Activated CD4-positive, alpha-beta T cell treated with anti-CD3 and anti-CD28 coated beads for 36 hours (primary cell): ENCODE measurements at regions of chr1 and their contacts with region 1.

Region 1: DNA sequence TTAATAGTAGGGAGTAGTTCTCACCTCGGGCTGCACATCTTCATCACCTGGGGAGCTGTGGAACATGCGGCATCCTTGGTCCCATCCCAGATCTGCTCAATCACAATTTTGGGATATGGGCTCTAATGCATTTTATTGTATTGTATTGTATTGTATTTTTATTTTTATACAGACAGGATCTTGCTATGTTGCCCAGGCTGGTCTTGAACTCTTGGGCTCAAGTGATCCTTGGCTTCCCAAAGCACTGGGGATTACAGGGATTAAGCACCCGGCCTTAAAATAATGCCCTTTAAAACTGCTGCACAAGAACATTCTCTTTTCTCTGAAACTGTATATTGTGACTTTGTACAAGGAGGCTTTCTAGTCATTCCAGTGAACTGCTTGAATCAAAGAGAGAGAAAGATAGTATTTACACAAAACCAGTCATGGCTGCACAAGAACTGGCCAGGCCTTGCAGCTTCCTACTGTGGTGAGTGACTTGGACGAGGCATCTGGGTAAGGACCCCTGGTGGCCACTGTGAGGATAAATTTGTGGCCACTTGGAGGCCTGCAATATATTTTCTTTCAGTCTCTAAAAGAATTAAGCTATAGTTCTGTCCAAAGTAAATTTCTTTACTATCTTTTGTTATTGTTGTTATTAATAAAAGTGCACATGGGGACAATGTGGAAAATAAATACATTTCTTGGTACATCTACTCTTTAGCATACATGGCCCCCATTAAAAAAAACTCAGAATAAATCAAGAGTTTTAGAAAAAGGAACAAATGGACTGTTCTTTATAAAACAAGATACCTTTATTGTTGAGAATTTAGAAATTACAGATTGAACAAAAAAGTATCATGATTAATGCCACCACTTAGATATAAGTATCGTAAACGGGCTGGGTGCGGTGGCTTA is 48.0 kb downstream of the TBCE start:
- DNase-seq: peak; percentile 78
- ATAC-seq: peak; percentile 84
- H3K4me3 Mint-ChIP-seq: no peak overlapping the region
- H3K27ac Mint-ChIP-seq: no peak overlapping the region
- H3K4me1 Mint-ChIP-seq: no peaks in the 10 kb centered on the region
- H3K27me3 Mint-ChIP-seq: no peaks in the 10 kb centered on the region

Region 2: GRCh38 chr1:235093696-235094592 is 321.3 kb before region 1 on chr1:
- CTCF ChIA-PET with region 1: interaction called, 10 read pairs
- POLR2A ChIA-PET with region 1: interaction called, 5 read pairs
- intact Hi-C with region 1: loop called (anchors 1 to 2 kb)
- DNase-seq: peak; percentile 92
- ATAC-seq: peak; percentile 97
- H3K4me3 Mint-ChIP-seq: no peak overlapping the region
- H3K27ac Mint-ChIP-seq: no peak overlapping the region
- H3K4me1 Mint-ChIP-seq: peaks cover 8% of the 10 kb centered on the region
- H3K27me3 Mint-ChIP-seq: peaks cover 3% of the 10 kb centered on the region

Region 3: GRCh38 chr1:235206533-235207208 is 208.6 kb before region 1 on chr1:
- CTCF ChIA-PET with region 1: interaction called, 10 read pairs
- POLR2A ChIA-PET with region 1: no interaction called
- intact Hi-C with region 1: loop called in 1 of 2 experiments (anchors 5 kb)
- DNase-seq: peak; percentile 25
- ATAC-seq: peak; percentile 98
- H3K4me3 Mint-ChIP-seq: peak overlapping the region; percentile 12
- H3K27ac Mint-ChIP-seq: peak overlapping the region; percentile 92
- H3K4me1 Mint-ChIP-seq: peaks cover 29% of the 10 kb centered on the region
- H3K27me3 Mint-ChIP-seq: no peaks in the 10 kb centered on the region

Region 4: GRCh38 chr1:235253219-235253962 is 161.9 kb before region 1 on chr1:
- CTCF ChIA-PET with region 1: interaction called, 80 read pairs
- POLR2A ChIA-PET with region 1: no interaction called
- intact Hi-C with region 1: loop called (anchors 1 kb)
- DNase-seq: peak; percentile 78
- ATAC-seq: peak; percentile 99
- H3K4me3 Mint-ChIP-seq: no peak overlapping the region
- H3K27ac Mint-ChIP-seq: no peak overlapping the region
- H3K4me1 Mint-ChIP-seq: peaks cover 31% of the 10 kb centered on the region
- H3K27me3 Mint-ChIP-seq: no peaks in the 10 kb centered on the region

Region 5: DNA sequence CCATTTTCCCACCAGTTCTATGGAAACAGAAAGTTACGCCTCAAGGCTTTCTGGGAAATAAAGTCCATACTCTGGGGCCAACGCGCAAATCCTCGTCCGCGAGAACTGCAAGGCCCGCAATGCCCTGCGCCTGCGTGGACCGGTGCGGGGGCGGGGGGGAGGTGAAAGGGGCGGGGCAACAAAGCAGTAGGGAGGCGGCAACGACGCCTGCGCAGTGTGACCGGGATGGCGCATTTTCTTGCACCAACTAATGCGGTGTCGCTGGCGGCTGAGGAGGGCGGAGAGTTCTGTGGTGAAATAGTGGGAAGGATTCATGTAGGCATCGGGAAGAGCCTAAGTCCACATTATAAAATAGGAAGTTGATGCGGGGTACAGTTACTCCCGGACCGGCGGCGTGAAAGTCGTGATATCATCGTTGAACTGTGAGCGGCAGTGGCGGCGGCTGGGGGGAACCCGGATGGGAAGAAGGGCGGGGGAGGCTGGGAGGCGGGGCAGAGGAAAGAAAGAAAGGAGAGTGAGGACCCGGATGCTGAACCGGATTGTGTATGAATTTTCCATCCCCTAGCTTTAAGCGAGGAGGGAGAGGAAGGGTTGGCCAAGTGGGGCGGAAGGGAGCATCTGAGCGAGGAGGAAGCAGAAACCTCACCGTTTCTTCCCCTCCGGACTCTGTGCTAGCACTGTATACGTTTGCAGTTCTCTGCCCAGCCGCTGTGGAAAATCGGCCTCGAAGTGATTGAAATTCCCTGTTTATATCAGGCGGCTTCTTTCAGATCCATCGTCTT is 86.7 kb before region 1 on chr1 and contains the start of gene GGPS1:
- CTCF ChIA-PET with region 1: interaction called, 18 read pairs
- POLR2A ChIA-PET with region 1: no interaction called
- intact Hi-C with region 1: loop called (anchors 2 to 5 kb)
- DNase-seq: peak; percentile 99
- ATAC-seq: peak; percentile 84
- H3K4me3 Mint-ChIP-seq: no peak within 1 kb of the TSS
- H3K27ac Mint-ChIP-seq: no peak within 1 kb of the TSS
- H3K4me1 Mint-ChIP-seq: peaks cover 42% of the 10 kb centered on the region
- H3K27me3 Mint-ChIP-seq: no peaks in the 10 kb centered on the region
- total RNA-seq, gene GGPS1: 35.6 to 37.4 TPM

Region 6: DNA sequence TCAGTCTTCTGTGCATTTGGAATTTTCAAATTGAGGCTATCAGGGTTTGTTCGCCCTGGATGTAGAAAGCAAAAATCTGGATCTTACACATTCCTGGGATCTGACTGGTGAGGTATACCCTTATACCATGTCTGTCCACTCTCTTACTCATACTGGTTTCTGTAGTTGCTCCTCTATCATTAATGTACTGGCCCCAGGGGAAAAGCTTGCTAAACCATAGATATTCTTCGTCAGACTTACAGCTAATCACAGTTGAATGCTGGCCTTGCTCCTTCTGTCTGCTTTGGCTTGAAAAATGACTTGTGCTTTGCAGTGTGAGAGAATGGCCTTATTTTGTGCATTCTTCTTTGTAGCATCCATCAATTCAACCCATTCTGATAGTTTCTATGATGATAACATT is 17.5 kb before region 1 on chr1:
- CTCF ChIA-PET with region 1: interaction called, 10 read pairs
- POLR2A ChIA-PET with region 1: no interaction called
- intact Hi-C with region 1: no loop called
- DNase-seq: no peak
- ATAC-seq: no peak
- H3K4me3 Mint-ChIP-seq: no peak overlapping the region
- H3K27ac Mint-ChIP-seq: no peak overlapping the region
- H3K4me1 Mint-ChIP-seq: peaks cover 2% of the 10 kb centered on the region
- H3K27me3 Mint-ChIP-seq: no peaks in the 10 kb centered on the region